PC-9 (cell line): ENCODE measurements at regions of chr14 and their contacts with region 1.

Region 1: DNA sequence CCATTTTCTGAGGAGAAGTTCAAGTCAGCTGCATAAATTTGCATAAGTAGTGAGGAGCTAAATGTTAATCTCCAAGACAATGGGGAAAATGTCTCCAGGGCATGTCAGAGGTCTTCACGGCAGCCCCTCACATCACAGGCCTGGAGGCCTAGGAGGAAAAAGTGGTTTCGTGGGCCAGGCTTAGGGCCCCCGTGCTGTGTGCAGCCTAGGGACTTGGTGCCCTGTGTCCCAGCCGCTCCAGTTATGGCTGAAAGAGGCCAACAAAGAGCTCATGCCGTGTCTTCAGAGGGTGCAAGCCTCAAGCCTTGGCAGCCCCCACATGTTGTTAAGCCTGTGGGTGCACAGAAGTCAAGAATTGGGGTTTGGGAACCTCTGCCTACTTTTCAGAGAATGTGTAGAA is 41.9 kb upstream of the RD3L start:
- DNase-seq: no peak
- H3K4me3 ChIP-seq: no peak overlapping the region
- H3K27ac ChIP-seq: no peak overlapping the region
- H3K4me1 ChIP-seq: no peaks in the 10 kb centered on the region
- H3K27me3 ChIP-seq: no peaks in the 10 kb centered on the region
- CTCF ChIP-seq: no peak

Region 2: DNA sequence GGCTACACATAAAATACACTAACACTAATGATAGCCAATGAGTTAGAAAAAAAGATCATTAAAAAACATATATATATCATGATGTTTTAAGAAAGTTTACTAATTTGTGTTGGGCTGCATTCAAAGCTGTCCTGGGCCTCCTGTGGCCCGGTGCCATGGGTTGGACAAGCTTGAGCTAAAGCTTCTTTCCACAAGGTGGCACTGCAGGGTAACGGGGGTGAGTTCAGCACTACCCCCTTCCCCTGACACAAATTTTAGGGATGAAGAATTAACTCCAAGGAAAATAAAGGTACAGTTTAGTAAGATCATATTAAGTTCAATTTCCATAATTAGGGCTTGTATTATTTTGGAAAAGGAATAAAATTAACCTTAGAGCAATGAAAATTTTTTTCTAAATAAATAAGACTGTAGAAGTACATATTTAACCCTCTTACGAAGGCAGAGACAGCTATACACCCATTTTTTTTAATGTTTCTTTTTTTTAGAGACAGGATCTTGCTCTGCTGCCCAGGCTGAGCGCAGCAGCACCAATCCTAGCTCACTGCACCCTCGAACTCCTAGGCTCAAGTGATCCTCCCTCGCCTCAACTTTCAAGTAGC is 175.7 kb before region 1 on chr14:
- CTCF ChIA-PET with region 1: no interaction called
- POLR2A ChIA-PET with region 1: no interaction called
- intact Hi-C with region 1: loop called (anchors 1 kb)
- DNase-seq: peak; percentile 49 to 69
- H3K4me3 ChIP-seq: no peak overlapping the region
- H3K27ac ChIP-seq: no peak overlapping the region
- H3K4me1 ChIP-seq: no peaks in the 10 kb centered on the region
- H3K27me3 ChIP-seq: no peaks in the 10 kb centered on the region
- CTCF ChIP-seq: peak; percentile 92

Region 3: GRCh38 chr14:103910262-103910935 is 73.8 kb before region 1 on chr14:
- CTCF ChIA-PET with region 1: no interaction called
- POLR2A ChIA-PET with region 1: no interaction called
- intact Hi-C with region 1: loop called (anchors 1 kb)
- DNase-seq: peak; percentile 84 to 93
- H3K4me3 ChIP-seq: no peak overlapping the region
- H3K27ac ChIP-seq: no peak overlapping the region
- H3K4me1 ChIP-seq: 0 out of 2 replicates have a peak, but pooled peaks cover 3% of the 10 kb centered on the region
- H3K27me3 ChIP-seq: no peaks in the 10 kb centered on the region
- CTCF ChIP-seq: peak; percentile 87

Region 4: DNA sequence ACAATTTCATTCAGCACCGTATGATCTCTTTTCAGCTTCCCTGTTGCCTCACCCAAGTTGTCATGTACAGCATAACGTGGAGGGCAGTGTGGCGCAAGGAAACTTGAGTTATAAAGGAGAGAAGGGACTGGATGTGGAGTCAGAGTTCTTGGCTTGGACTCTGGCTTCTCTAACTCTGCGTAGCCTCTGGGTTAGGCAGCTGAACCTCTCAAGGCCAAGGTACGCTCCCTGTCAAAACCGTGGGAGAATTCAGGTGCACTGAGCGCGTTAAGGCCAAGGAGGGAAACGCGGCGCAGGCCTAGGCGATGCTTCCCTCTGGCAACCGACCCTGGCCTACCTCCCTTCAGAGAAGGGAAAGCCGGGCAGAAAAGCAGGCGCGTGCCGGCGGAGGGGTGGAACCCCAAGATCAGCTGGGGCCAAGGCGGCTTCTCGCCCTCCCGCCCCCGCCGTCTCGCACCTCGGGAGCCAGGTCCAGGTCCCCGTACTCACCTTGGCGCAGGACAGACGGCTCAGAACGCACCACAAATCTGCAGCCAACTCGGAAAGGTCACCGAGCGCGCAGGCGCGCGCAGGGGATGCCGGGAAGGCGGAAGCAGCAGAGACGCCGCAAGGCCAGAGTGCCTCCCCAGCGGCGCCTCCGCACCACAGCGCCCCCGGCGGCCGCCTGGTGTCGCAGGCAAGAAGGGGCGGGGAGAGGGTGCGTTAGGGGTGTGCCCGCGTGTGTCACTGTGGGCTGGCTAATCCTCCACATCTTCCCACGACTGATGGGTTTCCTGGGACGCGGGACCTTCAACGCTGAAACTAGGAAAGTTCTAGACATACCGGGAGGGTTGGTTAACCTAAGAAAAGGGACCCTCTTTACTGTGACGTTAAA is 63.0 kb before region 1 on chr14:
- CTCF ChIA-PET with region 1: no interaction called
- POLR2A ChIA-PET with region 1: interaction called, 14 read pairs
- intact Hi-C with region 1: loop called (anchors 5 kb)
- DNase-seq: peak; percentile 78 to 96
- H3K4me3 ChIP-seq: peak overlapping the region; percentile 100
- H3K27ac ChIP-seq: peak overlapping the region; percentile 90
- H3K4me1 ChIP-seq: peaks cover 14% of the 10 kb centered on the region
- H3K27me3 ChIP-seq: no peaks in the 10 kb centered on the region
- CTCF ChIP-seq: peak; percentile 92

Region 5: GRCh38 chr14:103960457-103961055 is 23.6 kb before region 1 on chr14:
- CTCF ChIA-PET with region 1: no interaction called
- POLR2A ChIA-PET with region 1: no interaction called
- intact Hi-C with region 1: no loop called
- DNase-seq: no peak
- H3K4me3 ChIP-seq: no peak overlapping the region
- H3K27ac ChIP-seq: no peak overlapping the region
- H3K4me1 ChIP-seq: no peaks in the 10 kb centered on the region
- H3K27me3 ChIP-seq: no peaks in the 10 kb centered on the region
- CTCF ChIP-seq: no peak